CD8-positive, alpha-beta memory T cell (primary cell): ENCODE measurements at regions of chr1 and their contacts with region 1.

Region 1: DNA sequence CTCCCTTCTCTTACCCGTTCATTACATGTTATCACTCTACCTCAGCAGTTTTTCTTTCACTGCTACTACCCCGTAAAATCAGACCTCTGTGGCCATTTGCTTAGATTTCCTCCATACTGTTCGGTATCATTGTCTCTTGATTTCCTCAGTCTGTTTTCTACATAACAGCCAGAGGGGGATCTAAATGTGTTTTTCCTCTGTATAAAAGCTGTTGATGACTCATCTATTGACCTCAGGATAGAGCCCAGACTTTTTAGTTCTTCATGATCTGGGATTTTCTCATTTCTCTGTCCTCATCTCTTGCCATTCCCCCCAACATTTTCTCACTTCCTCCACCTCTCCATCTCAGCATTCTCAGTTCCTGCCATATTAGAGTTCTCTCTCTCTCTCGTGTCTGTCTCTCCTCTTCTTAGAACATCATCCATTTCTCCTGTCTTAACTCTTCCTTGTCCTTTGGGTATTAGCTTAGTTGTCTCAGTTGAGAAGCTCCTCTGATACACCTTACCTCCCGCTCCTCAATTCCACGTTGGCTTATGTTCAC is 10.5 kb downstream of the OTUD3 start:
- DNase-seq: no peak
- H3K4me3 ChIP-seq: no peak overlapping the region
- H3K4me3 Mint-ChIP-seq: peak overlapping the region in 1 of 7 donors; percentile 74
- H3K27ac ChIP-seq: no peak overlapping the region
- H3K27ac Mint-ChIP-seq: peak overlapping the region in 4 of 8 donors; percentile 13 to 49 (median 26)
- H3K4me1 ChIP-seq: no peaks in the 10 kb centered on the region
- H3K4me1 Mint-ChIP-seq: peaks cover 23 to 24% (median 23%) of the 10 kb centered on the region in 3 donors
- H3K27me3 ChIP-seq: no peaks in the 10 kb centered on the region
- H3K27me3 Mint-ChIP-seq: no peaks in the 10 kb centered on the region

Region 2: GRCh38 chr1:19882111-19883071 is 10.3 kb before region 1 on chr1 and contains the start of gene OTUD3:
- CTCF ChIA-PET with region 1: interaction called, 11 read pairs
- POLR2A ChIA-PET with region 1: no interaction called
- DNase-seq: peak; percentile 93 to 97 (median 96)
- H3K4me3 ChIP-seq: peak within 1 kb of the TSS; percentile 69
- H3K4me3 Mint-ChIP-seq: peak within 1 kb of the TSS; percentile 75 to 96 (median 86)
- H3K27ac ChIP-seq: peak within 1 kb of the TSS; percentile 66
- H3K27ac Mint-ChIP-seq: peak within 1 kb of the TSS; percentile 12 to 88 (median 85)
- H3K4me1 ChIP-seq: peaks cover 16% of the 10 kb centered on the region
- H3K4me1 Mint-ChIP-seq: peaks cover 29 to 48% (median 44%) of the 10 kb centered on the region in 3 donors
- H3K27me3 ChIP-seq: no peaks in the 10 kb centered on the region
- H3K27me3 Mint-ChIP-seq: peaks cover 5 to 23% of the 10 kb centered on the region in 2 donors
- total RNA-seq, gene OTUD3: 6.0 to 7.9 TPM

Region 3: GRCh38 chr1:20058531-20058930 is 165.8 kb after region 1 on chr1:
- CTCF ChIA-PET with region 1: no interaction called
- POLR2A ChIA-PET with region 1: no interaction called
- DNase-seq: peak in 1 of 5 donors; percentile 19
- H3K4me3 ChIP-seq: no peak overlapping the region
- H3K4me3 Mint-ChIP-seq: peak overlapping the region in 6 of 7 donors; percentile 48 to 84 (median 64)
- H3K27ac ChIP-seq: no peak overlapping the region
- H3K27ac Mint-ChIP-seq: peak overlapping the region in 5 of 8 donors; percentile 51 to 89 (median 65)
- H3K4me1 ChIP-seq: peaks cover 27% of the 10 kb centered on the region
- H3K4me1 Mint-ChIP-seq: peaks cover 29 to 33% (median 33%) of the 10 kb centered on the region in 3 donors
- H3K27me3 ChIP-seq: no peaks in the 10 kb centered on the region
- H3K27me3 Mint-ChIP-seq: peaks cover 3 to 11% of the 10 kb centered on the region in 2 donors